Activated T-helper 1 cell treated with anti-CD3 and anti-CD28 coated beads, Interleukin-12 subunit alpha, Interleukin-12 subunit beta, Interleukin-2, Interleukin-4 antibody, amounts not matched to agents 30 ng/mL and 10 ng/mL and 1 ng/mL, durations not matched to agents 14 hours and 24 hours and 36 hours (primary cell): ENCODE measurements at regions of chr2 and their contacts with region 1.

Region 1: GRCh38 chr2:222860740-222861410 is at the start of gene ACSL3:
- DNase-seq: peak; percentile 95
- H3K4me3 Mint-ChIP-seq: peak within 1 kb of the TSS; percentile 80
- H3K27ac Mint-ChIP-seq: peak within 1 kb of the TSS; percentile 98
- H3K4me1 Mint-ChIP-seq: peaks cover 9% of the 10 kb centered on the region
- H3K27me3 Mint-ChIP-seq: peaks cover 15% of the 10 kb centered on the region
- total RNA-seq, gene ACSL3: 75.4 and 79.4 TPM in 2 replicates

Region 2: DNA sequence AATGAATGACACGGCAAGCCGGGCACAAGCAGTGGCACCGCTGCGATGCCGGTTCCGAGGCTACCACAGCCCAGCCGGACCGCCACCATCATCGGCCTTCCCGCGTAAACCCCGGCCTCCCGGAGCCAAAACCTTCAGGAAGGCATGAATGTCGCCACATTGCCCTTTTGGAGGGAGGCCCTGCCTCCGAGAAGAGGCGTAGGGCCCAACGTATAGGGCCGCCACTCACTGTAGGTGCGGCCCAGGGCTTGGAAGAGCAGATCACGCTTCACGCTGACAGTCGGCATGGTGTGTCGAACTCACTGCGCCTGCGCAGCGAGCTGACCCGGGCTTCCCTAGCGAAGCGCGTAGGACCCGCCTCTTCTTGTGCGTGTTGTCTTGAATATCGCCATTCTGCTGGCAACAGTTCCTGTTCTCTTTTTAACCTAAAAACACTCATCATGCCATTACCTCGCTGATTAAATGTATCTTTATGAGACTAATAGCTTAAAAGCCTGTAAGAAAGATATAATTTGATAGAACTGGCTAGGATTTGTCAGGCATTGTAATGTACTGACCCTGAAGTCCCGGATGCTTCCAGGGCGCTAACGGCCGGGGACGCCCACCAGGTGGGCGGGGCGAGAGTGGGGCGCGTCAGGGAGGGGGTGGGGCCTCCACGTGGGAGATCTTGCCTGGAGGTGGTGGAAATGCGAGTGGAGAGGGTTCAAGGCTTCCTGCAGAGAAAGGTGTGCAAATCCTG is 204.9 kb before region 1 on chr2 and contains the start of gene FARSB:
- intact Hi-C with region 1: loop called (anchors 1 kb)
- DNase-seq: peak; percentile 90
- H3K4me3 Mint-ChIP-seq: peak within 1 kb of the TSS; percentile 95
- H3K27ac Mint-ChIP-seq: peak within 1 kb of the TSS; percentile 87
- H3K4me1 Mint-ChIP-seq: peaks cover 36% of the 10 kb centered on the region
- H3K27me3 Mint-ChIP-seq: no peaks in the 10 kb centered on the region
- total RNA-seq, gene FARSB: 48.9 and 53.4 TPM in 2 replicates

Region 3: DNA sequence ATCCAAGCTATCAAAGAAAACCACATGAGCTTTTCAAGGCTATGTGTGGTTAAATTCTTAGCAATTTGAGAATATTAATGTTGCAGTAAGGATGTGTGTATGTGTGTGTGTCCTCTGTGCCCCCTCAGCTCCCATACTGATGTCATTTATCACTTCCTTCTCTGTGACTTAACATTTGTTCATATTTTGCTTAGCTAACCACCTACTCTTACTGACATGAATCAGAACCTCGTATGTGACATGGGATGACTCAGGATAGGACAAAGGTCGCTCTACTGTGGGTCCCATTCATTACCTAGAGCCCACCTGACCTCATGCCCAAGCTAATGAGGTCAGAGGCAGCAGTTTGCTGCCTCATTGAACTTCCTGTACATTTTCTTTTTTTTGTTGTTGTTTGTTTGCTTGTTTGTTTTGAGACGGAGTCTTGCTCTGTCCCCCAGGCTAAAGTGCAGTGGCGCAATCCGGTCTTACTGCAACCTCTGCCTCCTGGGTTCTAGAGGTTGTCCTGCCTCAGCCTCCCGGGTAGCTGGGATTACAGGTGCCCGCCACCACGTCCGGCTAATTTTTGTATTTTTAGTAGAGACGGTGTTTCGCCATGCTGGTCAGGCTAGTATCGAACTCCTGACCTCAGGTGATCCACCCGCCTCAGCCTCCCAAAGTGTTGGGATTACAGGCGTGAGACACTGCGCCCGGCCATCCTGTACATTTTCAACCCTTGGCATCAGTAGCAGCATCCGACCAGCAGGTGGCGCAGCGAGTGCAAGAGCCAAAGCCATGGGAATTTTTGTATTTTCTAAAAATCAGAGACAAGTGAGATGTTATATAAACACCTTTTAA is 153.0 kb before region 1 on chr2:
- intact Hi-C with region 1: loop called (anchors 1 kb)
- DNase-seq: peak; percentile 55
- H3K4me3 Mint-ChIP-seq: no peak overlapping the region
- H3K27ac Mint-ChIP-seq: no peak overlapping the region
- H3K4me1 Mint-ChIP-seq: peaks cover 11% of the 10 kb centered on the region
- H3K27me3 Mint-ChIP-seq: peaks cover 30% of the 10 kb centered on the region

Region 4: GRCh38 chr2:222760301-222760897 is 100.5 kb before region 1 on chr2:
- intact Hi-C with region 1: no loop called
- DNase-seq: no peak
- H3K4me3 Mint-ChIP-seq: no peak overlapping the region
- H3K27ac Mint-ChIP-seq: no peak overlapping the region
- H3K4me1 Mint-ChIP-seq: no peaks in the 10 kb centered on the region
- H3K27me3 Mint-ChIP-seq: peaks cover 5% of the 10 kb centered on the region

Region 5: GRCh38 chr2:222813177-222813843 is 47.6 kb before region 1 on chr2:
- intact Hi-C with region 1: loop called (anchors 1 kb)
- DNase-seq: no peak
- H3K4me3 Mint-ChIP-seq: peak overlapping the region; percentile 10
- H3K27ac Mint-ChIP-seq: peak overlapping the region; percentile 94
- H3K4me1 Mint-ChIP-seq: peaks cover 27% of the 10 kb centered on the region
- H3K27me3 Mint-ChIP-seq: peaks cover 7% of the 10 kb centered on the region

Region 6: DNA sequence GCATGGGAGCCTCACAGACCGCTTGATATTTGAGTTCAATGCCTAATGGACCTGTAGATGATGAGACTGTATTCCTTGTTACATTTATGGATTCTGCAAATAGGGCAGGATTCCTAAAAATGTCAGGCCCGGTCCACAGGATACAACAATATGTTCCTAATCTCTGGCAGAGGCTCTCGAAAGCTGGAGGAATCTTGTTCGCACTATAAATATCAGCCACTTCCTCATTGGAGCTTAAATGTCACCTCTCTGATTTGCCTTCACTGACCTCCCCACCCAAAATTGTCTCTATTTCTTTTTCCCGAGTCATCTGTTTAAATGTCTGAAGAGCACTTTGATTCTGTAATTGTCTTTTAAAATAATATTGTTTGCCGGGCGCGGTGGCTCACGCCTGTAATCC is 12.0 kb before region 1 on chr2:
- intact Hi-C with region 1: no loop called
- DNase-seq: no peak
- H3K4me3 Mint-ChIP-seq: no peak overlapping the region
- H3K27ac Mint-ChIP-seq: no peak overlapping the region
- H3K4me1 Mint-ChIP-seq: peaks cover 4% of the 10 kb centered on the region
- H3K27me3 Mint-ChIP-seq: peaks cover 9% of the 10 kb centered on the region

Region 7: DNA sequence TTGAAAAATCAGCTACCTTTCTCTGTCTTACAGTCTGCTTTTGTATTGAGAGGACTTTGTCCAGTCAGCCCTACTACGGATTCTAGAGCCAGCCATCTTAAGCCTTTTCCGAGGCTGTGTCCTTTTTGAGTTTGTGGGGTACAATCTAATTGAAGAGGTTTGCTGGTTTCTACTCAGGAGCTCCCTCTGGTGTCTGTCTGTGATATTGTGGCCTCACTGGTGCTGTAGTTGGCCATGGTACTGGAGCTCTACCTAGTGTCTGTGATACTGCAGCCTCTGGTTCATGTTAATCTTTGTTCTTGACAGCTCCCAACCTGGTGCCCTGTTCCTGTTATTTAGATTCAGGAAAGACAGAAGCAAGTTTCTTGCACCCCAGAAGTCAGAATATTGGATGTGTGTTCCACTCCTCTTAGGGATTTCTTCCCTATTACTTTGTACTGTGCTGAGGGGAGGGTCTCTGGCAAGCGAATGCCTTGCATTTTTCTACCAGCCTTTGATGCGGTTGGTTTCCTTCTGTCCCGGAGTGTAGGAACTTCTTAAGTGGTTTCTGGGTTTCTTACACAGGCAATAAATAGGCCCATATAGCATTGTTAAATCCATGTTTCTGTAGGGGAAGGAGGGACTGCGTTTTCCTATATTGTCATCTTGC is 78.5 kb after region 1 on chr2:
- intact Hi-C with region 1: loop called (anchors 1 kb)
- DNase-seq: peak; percentile 55
- H3K4me3 Mint-ChIP-seq: no peak overlapping the region
- H3K27ac Mint-ChIP-seq: no peak overlapping the region
- H3K4me1 Mint-ChIP-seq: peaks cover 13% of the 10 kb centered on the region
- H3K27me3 Mint-ChIP-seq: no peaks in the 10 kb centered on the region